ENCODE measurements at regions of chr17 and their contacts with region 1.

Region 1: DNA sequence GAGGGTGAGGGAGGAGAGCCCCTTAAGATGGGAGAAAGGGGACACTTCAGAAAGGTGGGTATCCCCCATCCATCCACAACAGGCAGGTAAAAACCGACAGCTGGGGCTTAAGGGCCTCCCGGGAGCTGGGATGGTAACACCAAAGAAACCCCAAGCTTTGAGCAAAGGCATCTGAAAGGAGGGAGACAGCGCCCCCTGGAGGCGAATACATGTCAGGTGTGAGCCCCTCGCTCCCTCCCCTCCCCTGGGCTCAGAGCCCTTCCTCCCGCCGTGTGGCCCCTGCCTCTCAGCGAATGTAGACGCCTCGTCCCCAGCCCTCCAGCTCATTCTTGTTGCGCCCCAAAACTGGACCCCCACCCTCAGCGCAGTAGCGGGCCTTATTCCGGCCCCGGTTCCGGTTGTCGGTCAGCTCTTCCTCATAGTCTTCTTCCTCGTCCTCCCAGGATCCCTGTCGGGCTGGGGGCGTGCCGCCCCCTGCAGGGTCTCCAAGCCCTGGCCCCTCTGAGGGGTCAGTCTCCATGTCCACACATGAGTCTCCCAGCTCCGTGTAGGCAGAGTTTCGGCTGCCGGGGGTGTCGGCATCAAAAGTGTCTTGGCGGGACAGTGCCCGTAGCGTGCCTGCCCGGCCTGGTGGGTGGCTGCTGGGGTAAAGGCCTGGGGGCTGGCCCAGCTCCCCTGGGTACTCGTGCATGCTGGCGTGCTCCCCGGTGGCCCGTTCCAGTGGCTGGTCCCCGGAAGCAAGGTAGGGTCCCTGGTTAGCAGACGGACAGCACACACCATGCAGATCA is 9.1 kb upstream of the ARL5C start:
- DNase-seq: no peak
- ATAC-seq: peak; percentile 62; the same call in 1 of the 2 replicates
- H3K4me3 ChIP-seq: no peak overlapping the region
- H3K27ac ChIP-seq: no peak overlapping the region
- H3K4me1 ChIP-seq: peaks cover 3% of the 10 kb centered on the region; the same call in 1 of the 2 replicates
- H3K27me3 ChIP-seq: no peaks in the 10 kb centered on the region
- CTCF ChIP-seq: peak; percentile 80

Region 2: DNA sequence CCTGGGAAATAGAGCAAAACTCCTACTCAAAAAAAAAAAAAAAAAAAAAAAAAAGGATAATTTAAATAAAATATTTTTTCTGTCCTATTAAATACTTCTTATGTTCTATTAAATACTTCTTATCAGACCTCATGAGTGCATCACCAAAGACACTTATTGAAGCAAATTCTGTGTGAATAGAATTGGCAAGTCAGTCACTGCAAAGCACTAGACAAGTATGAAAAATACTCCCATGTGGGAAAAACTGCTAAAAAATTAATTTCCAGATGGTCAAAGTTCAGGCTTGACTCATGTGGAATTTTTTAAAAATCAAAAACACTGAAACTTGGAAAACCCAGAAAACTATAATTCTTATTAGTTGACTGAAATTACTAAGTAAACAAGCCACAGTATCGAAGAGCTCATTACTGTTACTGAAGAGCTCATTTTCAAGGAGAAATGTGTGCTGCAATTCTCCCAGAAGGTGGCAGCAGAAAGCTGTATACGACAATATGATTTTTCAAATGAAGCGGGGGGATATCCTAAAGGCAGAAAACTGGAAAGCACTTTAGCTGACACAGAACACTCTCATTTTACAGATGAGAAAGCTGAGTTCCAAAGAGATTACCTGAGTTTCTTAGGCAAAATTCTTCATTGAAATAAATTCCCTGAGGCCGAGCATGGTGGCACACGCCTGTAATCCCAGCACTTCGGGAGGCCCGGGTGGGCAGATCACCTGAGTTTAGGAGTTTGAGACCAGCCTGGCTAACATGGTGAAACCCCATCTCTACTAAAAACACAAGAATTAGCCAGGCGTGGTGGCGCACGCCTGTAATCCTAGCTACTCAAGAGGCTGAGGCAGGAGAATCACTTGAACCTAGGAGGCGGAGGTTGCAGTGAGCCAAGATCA is 192.0 kb before region 1 on chr17:
- CTCF ChIA-PET with region 1: interaction called, 17 read pairs
- POLR2A ChIA-PET with region 1: no interaction called
- in situ Hi-C with region 1: no loop called
- intact Hi-C with region 1: no loop called
- DNase-seq: no peak
- ATAC-seq: peak; percentile 80
- H3K4me3 ChIP-seq: no peak overlapping the region
- H3K27ac ChIP-seq: no peak overlapping the region
- H3K4me1 ChIP-seq: no peaks in the 10 kb centered on the region
- H3K27me3 ChIP-seq: no peaks in the 10 kb centered on the region
- CTCF ChIP-seq: peak; percentile 66

Region 3: GRCh38 chr17:39408360-39408759 is 233.3 kb after region 1 on chr17:
- CTCF ChIA-PET with region 1: no interaction called
- POLR2A ChIA-PET with region 1: no interaction called
- in situ Hi-C with region 1: no loop called
- intact Hi-C with region 1: no loop called
- DNase-seq: no peak
- ATAC-seq: no peak
- H3K4me3 ChIP-seq: no peak overlapping the region
- H3K27ac ChIP-seq: no peak overlapping the region
- H3K4me1 ChIP-seq: no peaks in the 10 kb centered on the region; the same call in 1 of the 2 replicates
- H3K27me3 ChIP-seq: no peaks in the 10 kb centered on the region
- CTCF ChIP-seq: no peak

Measured in Panc1 (cell line).